Endothelial cell of umbilical vein (primary cell): ENCODE measurements at regions of chr2 and their contacts with region 1.

Region 1: DNA sequence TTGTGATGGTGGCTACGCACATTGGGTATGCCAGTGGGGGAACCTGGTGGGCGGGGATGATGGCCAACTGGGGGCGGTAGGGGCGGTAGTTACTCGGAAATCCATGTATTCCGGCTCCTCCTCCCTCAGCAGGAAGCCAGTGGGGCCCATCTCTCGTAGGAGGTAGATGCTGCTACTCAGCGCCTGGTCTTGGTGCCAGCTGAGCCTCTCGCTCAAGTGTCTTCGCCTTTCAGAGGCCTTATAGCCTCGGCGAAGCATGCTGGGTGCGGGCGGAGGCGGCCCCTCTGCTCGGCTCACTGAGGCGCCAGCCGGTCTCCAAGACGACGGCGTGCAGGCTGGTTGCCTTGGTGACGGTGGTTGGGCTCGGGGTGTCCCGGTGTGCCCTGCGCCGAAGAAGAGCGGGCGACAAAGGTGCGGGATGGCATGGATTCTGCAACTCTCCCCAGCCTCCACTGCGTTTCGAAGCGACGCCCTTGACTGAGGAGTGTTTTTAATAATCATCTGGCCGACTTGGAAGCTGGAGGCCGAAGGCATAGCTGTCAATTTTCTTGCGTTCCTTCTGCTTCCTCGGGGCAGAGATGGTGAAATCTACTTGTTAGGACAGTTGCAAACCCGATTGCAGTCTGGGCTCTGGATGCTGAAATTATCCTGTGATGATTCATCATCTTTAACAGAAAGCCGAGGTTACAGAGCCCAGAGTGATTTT is at the start of gene ZSWIM2:
- DNase-seq: peak; percentile 54
- H3K4me3 ChIP-seq: peak within 1 kb of the TSS; percentile 31 to 42 (median 41)
- H3K27ac ChIP-seq: no peak within 1 kb of the TSS
- H3K4me1 ChIP-seq: peaks cover 16% of the 10 kb centered on the region
- H3K27me3 ChIP-seq: no peaks in the 10 kb centered on the region
- CTCF ChIP-seq: peak in 1 of 2 donors; percentile 1
- POLR2A ChIP-seq: no peak
- total RNA-seq, gene ZSWIM2: not detected in 2 replicates

Region 2: GRCh38 chr2:186695081-186695756 is 153.8 kb before region 1 on chr2:
- CTCF ChIA-PET with region 1: no interaction called
- POLR2A ChIA-PET with region 1: no interaction called
- dilution Hi-C with region 1: no loop called
- intact Hi-C with region 1: loop called (anchors 2 kb)
- DNase-seq: peak; percentile 61
- H3K4me3 ChIP-seq: peak overlapping the region; percentile 20 to 63 (median 23)
- H3K27ac ChIP-seq: no peak overlapping the region
- H3K4me1 ChIP-seq: peaks cover 14% of the 10 kb centered on the region
- H3K27me3 ChIP-seq: no peaks in the 10 kb centered on the region
- CTCF ChIP-seq: no peak
- POLR2A ChIP-seq: no peak